WTC11 (cell line): ENCODE measurements at regions of chr13 and their contacts with region 1.

Region 1: DNA sequence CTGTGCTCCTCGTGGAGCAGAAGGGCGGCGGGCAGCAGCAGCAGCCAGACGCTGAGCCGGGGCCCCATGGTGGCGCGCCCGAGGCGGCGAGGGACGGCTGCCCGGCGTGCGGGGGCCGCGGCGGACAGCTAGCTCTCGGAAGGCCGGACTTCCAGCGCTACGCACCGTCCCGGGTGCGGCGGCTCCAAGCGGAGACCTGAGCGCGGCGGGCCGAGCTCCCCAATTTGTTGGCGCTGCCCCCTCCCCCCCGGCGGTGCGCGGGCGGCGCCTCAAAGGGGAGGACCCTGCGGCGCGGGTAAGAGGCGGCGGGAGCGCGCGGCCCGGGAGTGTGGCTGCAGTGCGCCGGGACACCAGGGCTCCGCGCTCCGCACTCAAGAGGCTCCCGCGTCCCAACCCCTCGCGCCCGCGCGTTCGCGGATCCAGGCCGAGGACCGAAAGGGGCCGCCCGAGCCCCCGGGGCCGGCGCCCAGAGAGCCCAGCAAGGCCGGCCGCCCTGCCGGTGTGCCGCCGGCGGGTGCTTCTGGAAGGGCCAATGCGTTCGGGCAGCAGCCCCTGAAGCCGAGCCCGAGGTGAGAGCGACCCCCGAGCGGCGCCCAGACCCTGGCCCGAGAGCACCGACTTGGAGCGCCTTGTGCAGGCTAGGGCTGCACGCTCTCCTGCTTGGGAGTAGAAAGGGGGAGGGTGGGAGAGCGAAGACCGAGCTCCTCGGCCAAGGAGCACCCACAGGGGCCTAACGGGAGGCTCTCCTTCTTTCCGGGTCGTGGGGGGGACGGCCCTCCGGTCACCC is at the starts of genes COL4A1 and COL4A2:
- DNase-seq: peak; percentile 76
- ATAC-seq: peak; percentile 51
- H3K4me3 Mint-ChIP-seq: peak within 1 kb of the TSS; percentile 88
- H3K27ac Mint-ChIP-seq: no peak within 1 kb of the TSS
- H3K4me1 Mint-ChIP-seq: peaks cover 34% of the 10 kb centered on the region
- H3K27me3 Mint-ChIP-seq: peaks cover 35% of the 10 kb centered on the region
- CTCF ChIP-seq: no peak
- total RNA-seq, gene COL4A1: 75.0 to 89.6 TPM (median 82.3 TPM) in 3 replicates
- total RNA-seq, gene COL4A2: 102 to 109 TPM (median 106 TPM) in 3 replicates

Region 2: GRCh38 chr13:110323172-110323891 is 16.2 kb after region 1 on chr13:
- CTCF ChIA-PET with region 1: interaction called, 29 read pairs
- POLR2A ChIA-PET with region 1: interaction called, 11 read pairs
- DNase-seq: no peak
- ATAC-seq: peak; percentile 54
- H3K4me3 Mint-ChIP-seq: no peak overlapping the region
- H3K27ac Mint-ChIP-seq: 0 out of 2 replicates have a peak overlapping the region, but pooled peaks have one; percentile 11
- H3K4me1 Mint-ChIP-seq: peaks cover 64% of the 10 kb centered on the region
- H3K27me3 Mint-ChIP-seq: no peaks in the 10 kb centered on the region
- CTCF ChIP-seq: 0 out of 2 replicates have a peak, but pooled peaks have one; percentile 12

Region 3: GRCh38 chr13:110330491-110331001 is 23.4 kb after region 1 on chr13:
- CTCF ChIA-PET with region 1: interaction called, 29 read pairs
- POLR2A ChIA-PET with region 1: interaction called, 11 read pairs
- DNase-seq: no peak
- ATAC-seq: no peak
- H3K4me3 Mint-ChIP-seq: no peak overlapping the region
- H3K27ac Mint-ChIP-seq: peak overlapping the region; percentile 62; the same call in 1 of the 2 replicates
- H3K4me1 Mint-ChIP-seq: peaks cover 60% of the 10 kb centered on the region
- H3K27me3 Mint-ChIP-seq: no peaks in the 10 kb centered on the region
- CTCF ChIP-seq: no peak

Region 4: GRCh38 chr13:110548891-110549794 is 242.0 kb after region 1 on chr13:
- CTCF ChIA-PET with region 1: no interaction called
- POLR2A ChIA-PET with region 1: no interaction called
- DNase-seq: no peak
- ATAC-seq: peak; percentile 36; the same call in 1 of the 2 replicates
- H3K4me3 Mint-ChIP-seq: no peak overlapping the region
- H3K27ac Mint-ChIP-seq: peak overlapping the region; percentile 54; the same call in 1 of the 2 replicates
- H3K4me1 Mint-ChIP-seq: peaks cover under 1% of the 10 kb centered on the region; the same call in 1 of the 2 replicates
- H3K27me3 Mint-ChIP-seq: no peaks in the 10 kb centered on the region
- CTCF ChIP-seq: no peak